ENCODE measurements at regions of chr2 and their contacts with region 1.

Region 1: DNA sequence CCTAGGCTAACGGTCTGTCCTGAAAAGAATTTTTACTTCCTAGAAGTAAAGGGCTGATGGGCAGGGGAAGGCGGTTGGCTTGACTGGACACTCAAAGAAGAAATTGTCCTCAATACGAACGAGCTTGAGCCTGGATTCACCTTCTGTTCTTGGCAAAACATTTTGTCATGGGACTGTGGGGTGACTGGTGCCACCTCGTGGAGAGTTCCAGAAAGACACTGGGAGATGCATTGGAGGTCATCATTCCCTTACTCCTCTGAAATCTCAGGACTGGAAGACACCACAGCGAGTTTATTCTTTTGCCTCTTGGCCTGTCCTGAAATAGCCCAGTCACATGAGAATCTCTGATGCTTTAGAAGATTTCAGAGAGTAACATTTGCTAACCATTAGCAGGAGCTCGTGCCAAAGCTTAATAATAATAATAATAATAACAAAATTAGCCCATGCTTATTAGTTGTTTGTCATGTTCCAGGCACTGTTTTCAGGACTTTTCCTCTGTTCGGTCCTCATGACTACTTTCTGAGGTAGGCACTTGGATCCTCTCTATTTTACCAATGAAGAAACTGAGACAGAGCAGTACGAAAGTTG is 44.5 kb downstream of the TMEM182 start:
- DNase-seq: no peak
- ATAC-seq: peak; percentile 69

Region 2: GRCh38 chr2:102753563-102754159 is 52.7 kb before region 1 on chr2:
- intact Hi-C with region 1: loop called (anchors 1 kb)
- DNase-seq: no peak
- ATAC-seq: peak; percentile 51

Region 3: DNA sequence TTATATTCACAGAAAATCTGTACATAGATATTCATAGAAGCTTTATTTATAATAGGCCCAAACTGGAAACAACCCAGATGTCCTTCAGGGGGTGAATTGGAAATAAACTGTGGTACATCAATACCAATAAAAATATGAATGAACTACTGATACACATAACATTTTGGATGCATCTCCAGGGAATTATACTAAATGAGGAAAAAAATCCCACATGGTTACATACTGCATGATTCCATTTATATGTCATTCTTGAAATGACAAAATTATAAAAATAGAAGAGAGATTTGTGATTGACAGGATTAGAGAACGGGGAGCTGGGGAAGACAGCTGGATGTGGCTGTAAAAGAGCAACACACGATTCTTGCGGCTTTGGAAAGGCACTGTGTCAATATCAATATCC is 390.5 kb after region 1 on chr2:
- intact Hi-C with region 1: no loop called
- DNase-seq: no peak
- ATAC-seq: no peak